Cardiac septum (tissue), 1 donor: ENCODE measurements at regions of chr9 and their contacts with region 1.

Region 1: DNA sequence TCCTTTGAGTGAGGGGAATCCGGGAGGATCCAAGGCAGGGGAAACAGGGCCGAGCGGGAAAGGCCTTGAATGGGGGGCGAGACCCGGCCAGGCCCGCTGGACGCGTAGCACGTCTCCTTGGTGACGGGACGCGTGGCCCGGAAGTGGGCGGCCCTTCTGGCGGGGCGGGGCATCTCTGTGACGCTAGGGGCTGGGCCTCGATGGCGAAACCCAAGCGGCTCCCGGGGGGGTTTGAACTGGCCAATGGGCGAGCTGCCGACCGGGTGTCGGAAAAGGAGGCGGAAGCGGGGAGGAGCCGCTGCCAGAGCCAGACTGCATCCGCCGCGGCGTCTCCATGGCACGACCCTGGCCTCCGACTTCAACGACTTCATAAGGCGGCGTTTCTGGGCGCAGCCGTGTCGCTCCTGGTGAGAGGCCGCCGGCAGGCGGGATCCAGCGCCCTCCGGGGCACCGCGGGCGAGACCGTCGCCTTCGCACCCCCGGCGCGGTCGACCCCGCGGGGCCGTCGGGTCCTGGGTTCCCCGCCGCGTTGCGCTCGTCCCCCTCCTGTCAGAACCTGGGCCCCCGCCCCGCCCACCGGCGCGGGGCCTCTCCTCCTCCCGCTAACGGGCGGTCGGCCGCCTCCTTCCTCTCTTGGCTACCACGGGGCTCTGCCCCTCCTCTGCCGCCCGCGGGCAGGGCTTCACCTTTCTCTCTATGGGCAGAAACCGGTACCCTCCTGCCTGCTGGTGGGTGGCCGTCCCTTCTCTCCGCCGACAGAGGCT is at the start of gene ODF2:
- DNase-seq: peak; percentile 99
- total RNA-seq, gene ODF2: 20.8 TPM

Region 2: DNA sequence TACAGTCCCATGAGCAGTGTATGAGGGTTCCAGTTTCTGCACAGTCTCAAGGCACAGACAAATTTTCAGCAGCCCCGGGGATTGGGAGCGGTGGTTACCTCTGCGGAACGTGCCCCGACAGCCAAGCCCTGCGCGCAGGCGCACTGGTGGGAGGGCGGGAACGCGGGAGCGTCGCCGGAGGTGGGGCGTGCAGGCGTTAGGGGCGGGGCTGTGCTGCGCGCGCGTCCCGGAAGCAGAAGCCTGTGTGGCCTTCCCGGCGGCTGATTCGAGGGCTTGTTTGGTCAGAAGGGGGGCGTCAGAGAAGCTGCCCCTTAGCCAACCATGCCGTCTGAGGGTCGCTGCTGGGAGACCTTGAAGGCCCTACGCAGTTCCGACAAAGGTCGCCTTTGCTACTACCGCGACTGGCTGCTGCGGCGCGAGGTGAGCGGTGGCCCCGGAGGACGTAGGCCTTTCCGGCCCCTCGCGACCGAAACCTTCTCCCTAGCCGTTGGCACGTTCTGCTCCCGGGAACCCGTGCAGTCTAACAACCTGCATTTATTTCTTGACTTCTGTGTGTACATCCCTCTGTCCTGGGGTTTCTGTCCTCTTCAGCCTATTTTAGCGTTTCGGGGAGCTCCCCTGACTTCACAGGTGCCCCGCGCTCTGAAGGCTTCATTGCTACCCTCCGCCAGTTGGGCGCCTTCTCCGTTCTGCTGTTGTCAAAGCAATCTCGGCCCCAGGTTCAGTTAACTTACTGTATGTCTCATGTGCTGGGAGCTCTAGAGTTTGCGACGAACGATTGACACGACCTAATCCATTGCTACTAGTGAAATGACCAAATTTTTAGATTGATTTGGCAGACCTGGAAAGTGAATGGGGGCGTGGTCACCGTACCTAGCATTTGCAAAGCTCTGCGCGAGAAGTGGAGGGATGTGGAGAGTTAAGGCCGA is 48.7 kb after region 1 on chr9 and contains the start of gene GLE1:
- intact Hi-C with region 1: loop called (anchors 2 kb)
- DNase-seq: peak; percentile 97
- total RNA-seq, gene GLE1: 20.2 TPM

Region 3: GRCh38 chr9:128575469-128575868 is 119.4 kb after region 1 on chr9:
- intact Hi-C with region 1: no loop called
- DNase-seq: no peak